ENCODE measurements at regions of chr7 and their contacts with region 1.

Region 1: DNA sequence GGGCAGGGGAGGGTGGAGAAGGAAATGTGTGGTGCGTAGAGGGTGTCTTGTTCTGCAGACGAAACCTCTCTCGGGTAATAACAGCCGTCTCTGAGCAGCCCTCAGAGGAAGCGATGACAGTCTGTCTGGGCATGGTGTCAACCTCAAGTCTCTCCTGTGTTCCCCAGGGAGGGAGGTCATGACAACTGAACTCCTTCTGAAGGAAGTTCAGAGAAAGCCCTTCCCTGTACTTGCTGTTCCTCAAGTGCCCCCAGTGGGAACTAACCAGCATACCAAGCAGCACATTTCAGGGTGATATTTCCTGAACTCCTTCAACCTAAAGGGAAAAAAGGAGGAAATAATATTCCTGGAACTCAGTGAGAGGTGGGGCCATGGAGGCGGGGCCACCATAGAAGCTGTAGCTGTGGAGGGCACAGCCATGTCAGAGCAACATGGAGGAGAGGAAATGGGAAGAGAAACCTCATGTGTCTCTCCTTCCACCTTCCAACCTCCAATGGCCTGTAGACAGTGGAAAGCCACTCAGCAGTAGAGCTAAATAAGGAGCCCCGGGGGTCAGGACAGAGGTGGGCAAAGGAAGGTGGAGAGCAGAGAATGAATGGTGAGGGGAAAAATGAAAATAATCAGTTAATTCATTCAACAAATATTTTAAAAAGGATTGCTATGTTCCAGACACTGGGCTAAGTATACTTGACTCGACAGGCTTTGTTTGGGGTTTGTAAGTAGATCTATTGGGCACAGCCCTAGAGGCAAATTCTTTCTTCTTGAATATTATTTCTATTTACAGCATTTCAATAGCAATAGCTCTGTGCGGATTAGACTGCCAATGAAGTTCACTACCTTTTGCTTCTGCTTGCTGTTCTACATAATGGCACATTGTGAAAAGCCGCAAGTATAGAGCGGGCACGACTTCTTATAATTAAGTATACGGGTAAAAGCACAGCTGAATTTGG is 61.0 kb upstream of the AOAH start:
- DNase-seq: peak; percentile 72
- H3K4me3 ChIP-seq: peak overlapping the region in 2 of 3 experiments; percentile 11 to 12
- H3K27ac ChIP-seq: peak overlapping the region; percentile 86
- H3K4me1 ChIP-seq: peaks cover 25% of the 10 kb centered on the region
- H3K27me3 ChIP-seq: no peaks in the 10 kb centered on the region
- CTCF ChIP-seq: no peak

Region 2: DNA sequence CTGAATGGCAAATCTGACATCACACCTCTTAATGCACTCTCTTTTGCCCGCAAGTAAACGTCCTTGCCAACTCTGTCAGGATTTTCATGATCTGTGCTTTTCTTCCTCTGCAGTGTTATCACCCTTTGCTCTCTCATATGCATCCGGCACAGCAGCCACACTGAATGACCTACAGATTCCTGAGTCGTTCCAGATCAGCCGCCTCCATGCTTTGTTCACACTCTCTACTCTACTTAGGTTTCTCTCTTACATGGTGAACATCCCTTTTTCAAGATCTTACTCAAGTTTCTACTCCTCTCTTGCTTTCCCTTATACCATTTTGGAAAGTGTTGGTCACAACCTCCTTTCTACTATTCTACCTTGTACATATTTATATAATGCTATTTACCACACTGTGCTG is 66.8 kb after region 1 on chr7:
- CTCF ChIA-PET with region 1: no interaction called
- dilution Hi-C with region 1: no loop called
- in situ Hi-C with region 1: no loop called
- intact Hi-C with region 1: loop called (anchors 2 kb)
- DNase-seq: no peak
- H3K4me3 ChIP-seq: no peak overlapping the region
- H3K27ac ChIP-seq: no peak overlapping the region
- H3K4me1 ChIP-seq: peaks cover 16% of the 10 kb centered on the region
- H3K27me3 ChIP-seq: no peaks in the 10 kb centered on the region
- CTCF ChIP-seq: no peak